BJ (cell line): ENCODE measurements at regions of chr3 and their contacts with region 1.

Region 1: GRCh38 chr3:183912895-183913579 is 28.4 kb upstream of the PARL start:
- DNase-seq: no peak
- H3K4me3 ChIP-seq: no peak overlapping the region
- H3K27me3 ChIP-seq: peaks cover 7% of the 10 kb centered on the region
- CTCF ChIP-seq: no peak

Region 2: DNA sequence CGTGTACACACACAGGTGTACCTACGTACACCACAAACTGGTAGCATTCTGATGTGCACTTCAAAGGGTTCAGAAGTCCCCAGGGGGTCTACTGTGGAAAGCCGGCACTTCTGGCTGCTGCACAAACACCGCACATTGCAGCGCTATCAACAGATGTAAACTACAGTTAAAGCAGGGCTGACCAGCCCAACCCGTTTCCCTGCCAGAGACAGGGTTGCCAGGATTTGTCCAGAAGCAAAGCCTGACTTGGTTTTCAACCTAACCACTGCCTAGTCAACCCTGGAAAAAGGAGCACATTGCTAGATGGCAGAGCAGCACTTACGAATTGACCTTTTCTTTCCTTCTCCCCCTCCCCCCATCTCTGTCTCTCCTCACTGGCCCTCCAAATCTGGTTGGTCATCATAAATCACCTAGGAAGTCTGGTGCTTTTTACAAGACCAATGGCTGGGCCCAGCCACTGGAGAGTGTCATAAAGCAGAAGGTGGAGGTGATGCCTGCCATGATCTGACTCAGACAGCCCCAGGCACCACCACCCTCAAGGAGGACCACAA is 53.3 kb after region 1 on chr3:
- CTCF ChIA-PET with region 1: no interaction called
- POLR2A ChIA-PET with region 1: no interaction called
- DNase-seq: no peak
- H3K4me3 ChIP-seq: no peak overlapping the region
- H3K27me3 ChIP-seq: no peaks in the 10 kb centered on the region
- CTCF ChIP-seq: no peak

Region 3: GRCh38 chr3:184005941-184006507 is 93.0 kb after region 1 on chr3:
- CTCF ChIA-PET with region 1: no interaction called
- POLR2A ChIA-PET with region 1: interaction called, 12 read pairs
- DNase-seq: no peak
- H3K4me3 ChIP-seq: no peak overlapping the region
- H3K27me3 ChIP-seq: no peaks in the 10 kb centered on the region
- CTCF ChIP-seq: no peak